ENCODE measurements at regions of chrX and their contacts with region 1.

Region 1: DNA sequence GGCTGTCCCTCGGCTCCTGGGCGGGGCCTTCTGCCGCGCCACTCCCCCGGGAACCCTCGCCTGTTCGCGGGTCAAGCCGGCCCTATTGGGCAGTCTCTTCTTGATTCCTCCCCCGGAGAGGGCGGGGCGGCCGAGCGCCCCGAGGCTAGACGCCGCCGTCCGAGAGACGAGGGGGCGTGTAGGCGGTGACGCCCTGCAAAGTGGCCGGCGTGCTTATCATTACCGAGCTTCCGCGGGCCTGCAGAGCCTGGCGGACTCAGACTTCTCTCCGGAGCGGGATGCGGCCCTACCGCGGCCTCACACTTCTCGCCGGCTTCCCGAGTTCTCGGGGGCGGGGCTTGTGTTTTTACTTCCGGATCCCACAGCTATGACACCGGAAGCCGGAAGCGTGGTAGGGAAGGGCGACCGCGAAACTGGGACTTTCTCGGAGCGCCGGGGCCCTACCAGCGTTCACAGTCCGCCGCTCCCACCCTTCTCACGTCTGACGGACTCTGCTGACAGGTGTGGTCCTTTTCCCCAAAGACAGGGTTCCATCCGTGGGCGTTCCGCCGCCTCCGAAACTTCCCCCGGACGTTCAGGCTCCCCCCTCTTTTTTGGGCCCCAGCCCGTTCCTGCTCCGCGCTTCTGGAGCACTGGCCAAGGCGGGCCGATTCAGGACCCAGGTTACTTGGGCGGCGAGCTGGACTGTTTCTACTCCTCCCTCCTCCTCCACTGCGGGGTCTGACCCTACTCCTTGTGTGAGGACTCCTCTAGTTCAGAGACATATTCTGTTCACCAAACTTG is at the start of gene IKBKG:
- DNase-seq: peak; percentile 86
- ATAC-seq: peak; percentile 88
- H3K4me3 ChIP-seq: peak within 1 kb of the TSS; percentile 95
- H3K27ac ChIP-seq: peak within 1 kb of the TSS; percentile 97
- H3K4me1 ChIP-seq: peaks cover 9% of the 10 kb centered on the region
- H3K27me3 ChIP-seq: no peaks in the 10 kb centered on the region
- CTCF ChIP-seq: no peak
- POLR2A ChIP-seq: 0 out of 2 replicates have a peak, but pooled peaks have one; percentile 63
- RAD21 ChIP-seq: no peak
- total RNA-seq, gene IKBKG: 13.9 and 16.5 TPM in 2 replicates

Region 2: DNA sequence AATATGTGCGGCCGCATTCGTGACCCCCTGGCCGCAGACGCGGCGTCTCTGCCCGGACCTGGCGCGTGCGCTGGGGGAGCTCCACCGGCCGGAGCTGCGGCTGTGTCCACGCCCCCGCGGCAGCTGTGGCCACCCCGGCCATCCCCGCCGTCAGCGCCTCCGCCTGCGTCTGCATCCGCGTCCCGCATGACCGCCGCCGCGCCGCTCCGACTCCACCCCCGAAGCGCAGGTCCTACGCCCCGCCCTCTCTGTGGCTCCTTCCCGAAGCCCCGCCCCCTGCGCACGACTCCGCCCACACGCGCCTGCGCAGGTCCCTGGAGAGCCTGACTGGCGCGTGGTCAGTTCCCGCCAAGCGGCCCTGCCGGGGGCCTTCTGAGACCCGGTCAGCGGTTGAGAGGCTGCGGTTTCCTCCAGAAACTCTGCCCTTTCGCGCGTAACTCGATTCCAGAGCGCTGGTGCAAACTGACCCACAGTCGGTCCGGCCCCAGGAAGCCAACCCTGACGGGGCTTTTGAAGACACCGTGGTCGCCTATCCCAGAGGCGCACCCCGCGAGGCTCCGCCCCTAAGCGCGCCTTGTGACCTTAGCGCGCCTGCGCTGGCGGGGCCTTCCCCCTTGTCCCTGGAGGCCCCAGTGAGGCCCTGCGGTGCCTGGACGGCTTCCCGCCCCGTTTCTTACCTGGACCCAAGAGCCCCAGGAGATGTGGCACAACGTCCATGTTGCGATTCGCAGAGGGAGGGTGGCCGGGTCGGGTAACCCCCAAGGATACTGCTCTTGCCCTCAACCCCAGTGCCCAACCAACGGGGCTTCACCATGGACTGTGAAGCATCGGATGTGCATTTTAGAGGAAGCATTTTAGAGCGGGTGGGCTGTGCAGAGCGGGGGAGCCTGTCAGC is 68.5 kb before region 1 on chrX and contains the start of gene LAGE3:
- CTCF ChIA-PET with region 1: no interaction called
- POLR2A ChIA-PET with region 1: no interaction called
- dilution Hi-C with region 1: no loop called
- in situ Hi-C with region 1: no loop called
- intact Hi-C with region 1: no loop called
- DNase-seq: peak; percentile 84
- ATAC-seq: peak; percentile 95
- H3K4me3 ChIP-seq: peak within 1 kb of the TSS; percentile 52
- H3K27ac ChIP-seq: peak within 1 kb of the TSS; percentile 78
- H3K4me1 ChIP-seq: no peaks in the 10 kb centered on the region
- H3K27me3 ChIP-seq: no peaks in the 10 kb centered on the region
- CTCF ChIP-seq: no peak
- POLR2A ChIP-seq: no peak
- RAD21 ChIP-seq: no peak
- total RNA-seq, gene LAGE3: 3.6 and 6.4 TPM in 2 replicates

Region 3: DNA sequence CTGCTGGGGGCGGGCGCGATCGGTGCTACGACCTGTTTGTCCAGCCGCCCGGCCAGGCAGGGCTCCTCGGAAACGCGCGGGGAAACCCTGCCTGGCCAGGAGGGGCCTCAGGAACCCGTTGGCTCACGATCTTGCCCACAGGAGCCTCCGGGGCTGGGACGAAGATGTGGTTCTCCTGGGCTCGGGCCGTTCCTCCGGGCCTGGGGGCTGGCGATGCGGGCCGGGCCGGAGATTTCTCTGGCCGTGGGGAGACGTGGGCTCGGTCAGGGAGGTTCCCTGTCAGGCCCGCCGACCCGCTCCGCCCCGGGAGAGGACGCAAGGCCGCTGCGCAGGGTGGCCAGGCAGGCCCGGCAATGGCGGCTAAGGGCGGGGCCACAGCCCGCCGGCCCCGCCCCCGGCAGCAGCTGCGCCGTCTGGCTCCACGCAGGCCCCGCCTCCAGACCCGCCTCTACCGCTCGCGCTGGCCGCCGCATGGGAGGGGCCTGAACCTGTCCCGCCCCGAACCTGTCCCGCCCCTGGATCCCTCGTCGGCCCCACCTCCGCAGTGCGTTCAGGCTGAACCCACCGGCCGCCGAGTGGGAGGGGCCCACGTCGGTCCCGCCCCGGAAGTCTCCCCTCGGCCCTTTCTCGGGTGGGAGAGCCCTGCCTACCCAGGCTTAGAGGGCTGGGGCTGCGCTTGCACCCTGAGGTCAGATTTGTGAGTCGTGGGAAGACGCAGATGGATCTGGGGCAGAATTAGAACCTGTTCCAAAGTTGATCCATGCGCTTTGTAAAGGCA is 31.4 kb before region 1 on chrX and contains the start of gene FAM3A:
- CTCF ChIA-PET with region 1: no interaction called
- POLR2A ChIA-PET with region 1: no interaction called
- dilution Hi-C with region 1: no loop called
- in situ Hi-C with region 1: no loop called
- intact Hi-C with region 1: loop called (anchors 2 kb)
- DNase-seq: peak; percentile 85
- ATAC-seq: peak; percentile 96
- H3K4me3 ChIP-seq: peak within 1 kb of the TSS; percentile 87
- H3K27ac ChIP-seq: peak within 1 kb of the TSS; percentile 91
- H3K4me1 ChIP-seq: peaks cover 8% of the 10 kb centered on the region; the same call in 1 of the 2 replicates
- H3K27me3 ChIP-seq: no peaks in the 10 kb centered on the region
- CTCF ChIP-seq: no peak
- POLR2A ChIP-seq: peak; percentile 71; the same call in 1 of the 2 replicates
- RAD21 ChIP-seq: no peak
- total RNA-seq, gene FAM3A: 14.0 and 15.0 TPM in 2 replicates

Region 4: GRCh38 chrX:154593201-154593600 is 45.8 kb after region 1 on chrX:
- CTCF ChIA-PET with region 1: no interaction called
- POLR2A ChIA-PET with region 1: no interaction called
- dilution Hi-C with region 1: no loop called
- in situ Hi-C with region 1: no loop called
- intact Hi-C with region 1: no loop called
- DNase-seq: no peak
- ATAC-seq: no peak
- H3K4me3 ChIP-seq: no peak overlapping the region
- H3K27ac ChIP-seq: no peak overlapping the region
- H3K4me1 ChIP-seq: no peaks in the 10 kb centered on the region; the same call in 1 of the 2 replicates
- H3K27me3 ChIP-seq: peaks cover 20% of the 10 kb centered on the region
- CTCF ChIP-seq: no peak
- POLR2A ChIP-seq: no peak
- RAD21 ChIP-seq: no peak

Region 5: DNA sequence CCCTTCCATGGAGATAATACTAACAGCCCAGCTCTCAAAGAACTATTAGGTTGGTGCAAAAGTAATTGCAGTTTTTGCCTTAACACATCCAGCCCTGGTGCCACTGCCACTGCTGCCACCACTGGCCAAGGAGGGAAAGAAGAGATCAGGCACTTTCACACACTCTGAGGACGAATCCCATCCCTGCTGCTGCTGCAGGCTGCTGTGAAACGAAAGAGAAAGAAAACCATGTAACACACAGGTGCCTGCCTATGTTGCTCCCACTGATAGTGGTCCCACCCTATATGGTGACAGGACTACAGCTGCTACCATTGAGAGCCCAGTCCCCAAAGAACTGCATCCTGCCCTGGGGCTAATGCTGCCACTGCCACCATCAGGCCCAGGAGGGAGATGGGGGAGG is 1030.2 kb after region 1 on chrX:
- CTCF ChIA-PET with region 1: no interaction called
- POLR2A ChIA-PET with region 1: no interaction called
- dilution Hi-C with region 1: no loop called
- in situ Hi-C with region 1: no loop called
- intact Hi-C with region 1: no loop called
- DNase-seq: no peak
- ATAC-seq: no peak
- H3K4me3 ChIP-seq: no peak overlapping the region
- H3K27ac ChIP-seq: no peak overlapping the region
- H3K4me1 ChIP-seq: no peaks in the 10 kb centered on the region
- H3K27me3 ChIP-seq: no peaks in the 10 kb centered on the region
- CTCF ChIP-seq: no peak
- POLR2A ChIP-seq: no peak
- RAD21 ChIP-seq: no peak

Measured in IMR-90 (cell line).